H1 (cell line): ENCODE measurements at regions of chr22 and their contacts with region 1.

Region 1: GRCh38 chr22:42294034-42294985 is 23.9 kb upstream of the TCF20 start:
- DNase-seq: peak in 1 of 2 experiments; percentile 92
- H3K4me3 ChIP-seq: peak overlapping the region in 1 of 4 experiments; percentile 26; a peak in 1 of 8 replicates
- H3K27ac ChIP-seq: no peak overlapping the region
- H3K4me1 ChIP-seq: peaks cover 14 to 58% (median 37%) of the 10 kb centered on the region in 4 experiments
- H3K27me3 ChIP-seq: peaks cover 0 to 2% (median 0%) of the 10 kb centered on the region in 4 experiments; a peak in 4 of 7 replicates
- CTCF ChIP-seq: no peak
- EP300 ChIP-seq: no peak
- POLR2A ChIP-seq: no peak
- RAD21 ChIP-seq: peak; percentile 2 to 33; a peak in 2 of 4 replicates

Region 2: DNA sequence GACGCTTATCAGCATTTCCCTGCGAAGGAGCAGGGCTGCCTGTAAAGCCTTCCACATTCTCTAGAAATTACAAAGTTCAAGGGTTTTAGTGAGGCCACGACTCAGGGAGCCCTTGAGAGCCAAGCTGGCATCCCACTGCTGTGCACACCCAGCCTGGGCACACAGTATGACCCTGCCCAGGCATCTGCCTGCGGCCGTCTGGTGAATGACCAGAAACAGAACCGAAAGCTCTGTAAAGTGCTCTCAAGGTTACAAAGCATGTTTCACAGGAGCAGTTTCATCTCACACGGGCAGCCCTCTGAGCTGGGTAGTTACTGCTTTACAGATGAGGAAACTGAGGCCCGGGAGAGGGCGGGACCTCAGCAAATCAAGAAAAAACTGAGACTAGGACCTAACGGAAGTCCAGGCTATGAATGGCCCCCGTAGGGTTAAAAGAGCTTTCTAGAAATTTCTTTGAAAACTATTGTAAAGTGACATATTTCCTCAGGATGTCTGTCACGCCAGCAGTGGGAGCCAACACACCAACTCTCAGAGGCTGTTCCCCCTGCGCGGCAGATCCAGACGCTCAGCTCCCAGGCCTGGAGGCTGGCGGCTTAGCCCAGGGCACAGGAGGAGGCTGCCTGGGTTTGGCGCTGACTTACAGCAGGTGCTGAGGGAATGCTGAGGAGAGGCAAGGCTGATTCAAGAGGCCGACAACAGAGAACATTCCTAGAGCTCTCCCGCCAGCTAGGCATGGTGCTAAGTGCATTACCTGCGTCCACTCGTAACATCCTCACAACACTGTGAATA is 16.1 kb before region 1 on chr22:
- CTCF ChIA-PET with region 1: interaction called, 27 read pairs
- POLR2A ChIA-PET with region 1: interaction called, 7 read pairs
- DNase-seq: no peak
- H3K4me3 ChIP-seq: no peak overlapping the region
- H3K27ac ChIP-seq: no peak overlapping the region
- H3K4me1 ChIP-seq: peaks cover 29 to 43% (median 30%) of the 10 kb centered on the region in 4 experiments
- H3K27me3 ChIP-seq: peaks cover 0 to 43% (median 27%) of the 10 kb centered on the region in 4 experiments; a peak in 5 of 7 replicates
- CTCF ChIP-seq: peak in 2 of 3 experiments; percentile 18 to 25; a peak in 2 of 4 replicates
- EP300 ChIP-seq: no peak
- POLR2A ChIP-seq: no peak
- RAD21 ChIP-seq: peak; percentile 58 to 67

Region 3: GRCh38 chr22:42283278-42284201 is 10.8 kb before region 1 on chr22:
- CTCF ChIA-PET with region 1: interaction called, 27 read pairs
- POLR2A ChIA-PET with region 1: interaction called, 7 read pairs
- DNase-seq: peak in 1 of 2 experiments; percentile 71
- H3K4me3 ChIP-seq: peak overlapping the region; percentile 4 to 56 (median 38)
- H3K27ac ChIP-seq: no peak overlapping the region
- H3K4me1 ChIP-seq: peaks cover 0 to 17% (median 11%) of the 10 kb centered on the region in 4 experiments; a peak in 6 of 7 replicates
- H3K27me3 ChIP-seq: peaks cover 0 to 55% (median 39%) of the 10 kb centered on the region in 4 experiments; a peak in 6 of 7 replicates
- CTCF ChIP-seq: no peak
- EP300 ChIP-seq: no peak
- POLR2A ChIP-seq: no peak
- RAD21 ChIP-seq: no peak

Region 4: GRCh38 chr22:42308892-42309468 is 14.7 kb after region 1 on chr22:
- CTCF ChIA-PET with region 1: interaction called, 26 read pairs
- POLR2A ChIA-PET with region 1: interaction called, 5 read pairs
- DNase-seq: no peak
- H3K4me3 ChIP-seq: no peak overlapping the region
- H3K27ac ChIP-seq: no peak overlapping the region
- H3K4me1 ChIP-seq: peaks cover 0 to 22% (median 13%) of the 10 kb centered on the region in 4 experiments; a peak in 6 of 7 replicates
- H3K27me3 ChIP-seq: peaks cover 0 to 7% (median 6%) of the 10 kb centered on the region in 4 experiments; a peak in 3 of 7 replicates
- CTCF ChIP-seq: peak; percentile 4 to 25 (median 21); a peak in 2 of 4 replicates
- EP300 ChIP-seq: no peak
- POLR2A ChIP-seq: no peak
- RAD21 ChIP-seq: no peak

Region 5: GRCh38 chr22:42313804-42314581 is 19.7 kb after region 1 on chr22:
- CTCF ChIA-PET with region 1: interaction called, 26 read pairs
- POLR2A ChIA-PET with region 1: no interaction called
- DNase-seq: peak; percentile 72 to 78
- H3K4me3 ChIP-seq: no peak overlapping the region
- H3K27ac ChIP-seq: no peak overlapping the region
- H3K4me1 ChIP-seq: peaks cover 0 to 34% (median 19%) of the 10 kb centered on the region in 4 experiments; a peak in 5 of 7 replicates
- H3K27me3 ChIP-seq: no peaks in the 10 kb centered on the region; a peak in 2 of 7 replicates
- CTCF ChIP-seq: peak; percentile 72 to 77 (median 75)
- EP300 ChIP-seq: no peak
- POLR2A ChIP-seq: no peak
- RAD21 ChIP-seq: peak; percentile 79 to 86